ENCODE measurements at regions of chr1 and their contacts with region 1.

Region 1: GRCh38 chr1:84077476-84078107 is 66.5 kb upstream of the PRKACB start:
- DNase-seq: peak; percentile 66
- H3K4me3 ChIP-seq: peak overlapping the region; percentile 76 to 92 (median 76)
- H3K27ac ChIP-seq: peak overlapping the region; percentile 60
- H3K4me1 ChIP-seq: no peaks in the 10 kb centered on the region
- H3K27me3 ChIP-seq: no peaks in the 10 kb centered on the region
- CTCF ChIP-seq: no peak

Region 2: GRCh38 chr1:83978056-83978455 is 99.5 kb before region 1 on chr1:
- CTCF ChIA-PET with region 1: no interaction called
- dilution Hi-C with region 1: no loop called
- in situ Hi-C with region 1: no loop called
- intact Hi-C with region 1: no loop called
- DNase-seq: no peak
- H3K4me3 ChIP-seq: no peak overlapping the region
- H3K27ac ChIP-seq: no peak overlapping the region
- H3K4me1 ChIP-seq: no peaks in the 10 kb centered on the region
- H3K27me3 ChIP-seq: no peaks in the 10 kb centered on the region
- CTCF ChIP-seq: no peak

Region 3: GRCh38 chr1:83998498-83999315 is 78.9 kb before region 1 on chr1 and contains the start of gene TTLL7:
- CTCF ChIA-PET with region 1: no interaction called
- dilution Hi-C with region 1: no loop called
- in situ Hi-C with region 1: no loop called
- intact Hi-C with region 1: loop called (anchors 2 kb)
- DNase-seq: peak; percentile 76
- H3K4me3 ChIP-seq: peak within 1 kb of the TSS; percentile 89 to 94 (median 91)
- H3K27ac ChIP-seq: peak within 1 kb of the TSS; percentile 90
- H3K4me1 ChIP-seq: peaks cover 7% of the 10 kb centered on the region
- H3K27me3 ChIP-seq: no peaks in the 10 kb centered on the region
- CTCF ChIP-seq: no peak
- total RNA-seq, gene TTLL7: 15.5 to 16.1 TPM

Region 4: DNA sequence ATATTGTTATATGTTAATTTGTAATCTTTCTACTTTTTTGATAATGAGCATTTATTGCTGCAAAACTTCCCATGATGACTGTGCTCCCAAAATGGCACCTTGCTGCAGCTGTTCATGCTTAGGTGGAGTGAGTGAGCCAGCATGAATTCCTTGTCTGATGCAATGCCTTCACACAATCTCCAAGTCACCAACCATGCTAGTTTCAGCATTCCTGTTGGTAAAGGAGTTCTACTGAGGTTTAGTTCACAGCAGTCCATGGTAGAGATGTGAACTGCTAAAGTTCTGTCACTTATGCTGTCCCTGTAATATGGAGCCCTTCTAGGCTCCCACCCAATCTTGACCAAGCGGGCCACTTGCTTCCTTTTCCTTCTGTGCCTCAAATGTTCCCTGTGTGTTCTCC is 40.3 kb after region 1 on chr1:
- CTCF ChIA-PET with region 1: no interaction called
- dilution Hi-C with region 1: no loop called
- in situ Hi-C with region 1: no loop called
- intact Hi-C with region 1: loop called (anchors 1 kb)
- DNase-seq: peak; percentile 37
- H3K4me3 ChIP-seq: no peak overlapping the region
- H3K27ac ChIP-seq: no peak overlapping the region
- H3K4me1 ChIP-seq: peaks cover 8% of the 10 kb centered on the region
- H3K27me3 ChIP-seq: no peaks in the 10 kb centered on the region
- CTCF ChIP-seq: no peak